Activated T-helper 1 cell treated with anti-CD3 and anti-CD28 coated beads, Interleukin-12 subunit alpha, Interleukin-12 subunit beta, Interleukin-2, Interleukin-4 antibody, amounts not matched to agents 30 ng/mL and 10 ng/mL and 1 ng/mL, durations not matched to agents 14 hours and 24 hours and 36 hours (primary cell): ENCODE measurements at regions of chr5 and their contacts with region 1.

Region 1: DNA sequence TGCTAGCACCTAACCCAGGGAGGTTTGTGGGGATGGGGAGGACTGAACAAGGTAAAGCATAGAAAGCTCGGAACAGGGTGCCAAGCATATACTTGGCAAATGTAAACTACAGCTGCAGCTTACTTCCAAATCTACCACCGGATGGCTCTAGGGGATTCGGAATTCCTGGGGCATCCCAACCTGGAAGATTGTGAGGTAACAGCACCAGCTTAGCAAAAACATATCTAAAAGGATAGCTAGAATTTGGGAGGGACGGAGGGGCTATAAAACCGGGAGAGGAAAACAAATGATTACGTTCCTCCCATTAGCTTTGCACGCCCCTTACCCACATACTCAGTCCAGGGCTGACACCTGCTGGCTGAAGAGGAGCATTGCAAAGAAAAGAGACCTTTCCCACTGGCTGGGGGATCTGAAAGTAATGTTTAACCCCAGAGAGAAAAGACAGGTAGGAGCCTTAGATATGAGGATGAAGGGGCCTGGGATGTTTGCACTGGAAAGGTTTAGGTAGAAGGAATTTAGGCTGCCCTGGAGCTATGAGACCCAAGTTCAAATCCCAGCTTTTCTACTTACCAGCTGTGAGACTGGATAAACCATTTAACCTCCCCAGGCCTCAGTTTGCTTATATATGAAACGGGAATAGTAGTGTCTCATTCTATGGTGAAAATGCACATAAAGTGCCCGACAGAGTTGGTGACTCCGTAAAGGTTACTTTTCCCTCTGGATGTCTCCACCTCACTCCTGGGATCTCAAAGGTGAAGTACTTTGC is 73.6 kb downstream of the FAM114A2 start:
- DNase-seq: peak; percentile 19
- H3K4me3 Mint-ChIP-seq: no peak overlapping the region
- H3K27ac Mint-ChIP-seq: no peak overlapping the region
- H3K4me1 Mint-ChIP-seq: no peaks in the 10 kb centered on the region
- H3K27me3 Mint-ChIP-seq: peaks cover 7% of the 10 kb centered on the region

Region 2: DNA sequence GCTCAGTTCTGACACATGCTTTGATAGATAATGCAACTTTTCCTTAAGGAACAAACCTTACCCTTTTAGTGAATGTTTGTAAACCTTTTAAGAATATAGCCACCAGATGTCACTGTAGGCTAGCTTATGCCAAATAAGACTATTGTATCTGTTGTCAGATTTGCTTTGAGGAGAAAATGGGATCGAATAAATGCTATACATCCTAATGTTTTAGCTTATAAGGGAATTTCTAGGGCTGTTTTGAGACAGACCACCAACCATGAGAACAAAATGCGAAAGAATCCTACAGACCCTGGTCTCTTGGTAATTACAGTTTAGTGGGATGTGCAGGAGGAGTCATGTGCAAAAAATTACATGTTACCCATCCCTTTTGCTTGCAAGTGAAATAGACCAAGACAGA is 1432.3 kb before region 1 on chr5:
- intact Hi-C with region 1: loop called (anchors 1 kb)
- DNase-seq: no peak
- H3K4me3 Mint-ChIP-seq: no peak overlapping the region
- H3K27ac Mint-ChIP-seq: no peak overlapping the region
- H3K4me1 Mint-ChIP-seq: peaks cover under 1% of the 10 kb centered on the region
- H3K27me3 Mint-ChIP-seq: peaks cover 9% of the 10 kb centered on the region

Region 3: GRCh38 chr5:152560512-152561137 is 1404.4 kb before region 1 on chr5:
- intact Hi-C with region 1: loop called (anchors 1 kb)
- DNase-seq: peak; percentile 2
- H3K4me3 Mint-ChIP-seq: no peak overlapping the region
- H3K27ac Mint-ChIP-seq: no peak overlapping the region
- H3K4me1 Mint-ChIP-seq: no peaks in the 10 kb centered on the region
- H3K27me3 Mint-ChIP-seq: peaks cover 4% of the 10 kb centered on the region

Region 4: GRCh38 chr5:153496835-153497234 is 468.2 kb before region 1 on chr5:
- intact Hi-C with region 1: loop called (anchors 10 kb)
- DNase-seq: no peak
- H3K4me3 Mint-ChIP-seq: no peak overlapping the region
- H3K27ac Mint-ChIP-seq: no peak overlapping the region
- H3K4me1 Mint-ChIP-seq: no peaks in the 10 kb centered on the region
- H3K27me3 Mint-ChIP-seq: peaks cover 6% of the 10 kb centered on the region